A673 (cell line): ENCODE measurements at regions of chr4 and their contacts with region 1.

Region 1: GRCh38 chr4:10116580-10117358 is at the start of gene WDR1:
- DNase-seq: peak; percentile 89
- H3K4me3 ChIP-seq: peak within 1 kb of the TSS; percentile 66
- H3K27ac ChIP-seq: peak within 1 kb of the TSS; percentile 96
- H3K4me1 ChIP-seq: peaks cover 8% of the 10 kb centered on the region
- H3K27me3 ChIP-seq: no peaks in the 10 kb centered on the region
- CTCF ChIP-seq: no peak
- total RNA-seq, gene WDR1: 196 and 227 TPM in 2 replicates

Region 2: DNA sequence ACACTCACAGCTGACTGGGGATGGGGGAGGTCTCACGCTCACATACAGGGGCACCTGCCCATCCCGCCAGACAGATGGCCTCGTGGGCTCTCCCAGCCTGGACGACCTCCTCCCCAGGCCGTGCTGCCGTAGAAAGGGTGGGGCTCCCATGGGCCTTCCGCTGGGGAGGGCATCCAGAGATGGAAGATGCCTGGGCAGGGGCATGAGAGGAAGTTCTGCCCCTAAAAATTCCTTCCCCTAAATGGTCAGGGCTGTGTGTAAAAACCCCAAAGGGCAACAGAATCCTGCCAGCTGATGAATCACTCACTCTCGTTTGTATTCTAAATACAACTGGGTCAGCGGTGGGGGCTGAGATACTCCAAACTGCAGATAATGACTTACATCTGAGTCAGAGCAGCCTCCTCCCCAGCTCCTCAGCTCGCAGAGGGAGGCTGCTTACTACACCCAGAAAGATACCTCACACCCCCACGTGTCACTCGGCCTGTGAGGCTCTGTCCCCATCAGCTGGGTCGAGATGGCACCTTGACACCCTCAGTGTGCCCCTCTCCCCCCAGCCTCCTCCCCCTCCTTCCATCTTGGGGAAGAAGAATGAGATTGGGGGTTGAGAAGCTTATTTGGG is 10.2 kb before region 1 on chr4:
- CTCF ChIA-PET with region 1: no interaction called
- POLR2A ChIA-PET with region 1: interaction called, 10 read pairs
- intact Hi-C with region 1: no loop called
- DNase-seq: peak; percentile 57
- H3K4me3 ChIP-seq: no peak overlapping the region
- H3K27ac ChIP-seq: no peak overlapping the region
- H3K4me1 ChIP-seq: no peaks in the 10 kb centered on the region
- H3K27me3 ChIP-seq: no peaks in the 10 kb centered on the region
- CTCF ChIP-seq: no peak

Region 3: GRCh38 chr4:10565166-10565780 is 448.5 kb after region 1 on chr4:
- CTCF ChIA-PET with region 1: no interaction called
- POLR2A ChIA-PET with region 1: no interaction called
- intact Hi-C with region 1: no loop called
- DNase-seq: no peak
- H3K4me3 ChIP-seq: no peak overlapping the region
- H3K27ac ChIP-seq: no peak overlapping the region
- H3K4me1 ChIP-seq: no peaks in the 10 kb centered on the region
- H3K27me3 ChIP-seq: no peaks in the 10 kb centered on the region
- CTCF ChIP-seq: no peak

Region 4: GRCh38 chr4:11537846-11538245 is 1421.1 kb after region 1 on chr4:
- CTCF ChIA-PET with region 1: no interaction called
- POLR2A ChIA-PET with region 1: interaction called, 10 read pairs
- intact Hi-C with region 1: no loop called
- DNase-seq: no peak
- H3K4me3 ChIP-seq: no peak overlapping the region
- H3K27ac ChIP-seq: no peak overlapping the region
- H3K4me1 ChIP-seq: no peaks in the 10 kb centered on the region
- H3K27me3 ChIP-seq: no peaks in the 10 kb centered on the region
- CTCF ChIP-seq: no peak